HepG2 (cell line): ENCODE measurements at regions of chr19 and their contacts with region 1.

Region 1: DNA sequence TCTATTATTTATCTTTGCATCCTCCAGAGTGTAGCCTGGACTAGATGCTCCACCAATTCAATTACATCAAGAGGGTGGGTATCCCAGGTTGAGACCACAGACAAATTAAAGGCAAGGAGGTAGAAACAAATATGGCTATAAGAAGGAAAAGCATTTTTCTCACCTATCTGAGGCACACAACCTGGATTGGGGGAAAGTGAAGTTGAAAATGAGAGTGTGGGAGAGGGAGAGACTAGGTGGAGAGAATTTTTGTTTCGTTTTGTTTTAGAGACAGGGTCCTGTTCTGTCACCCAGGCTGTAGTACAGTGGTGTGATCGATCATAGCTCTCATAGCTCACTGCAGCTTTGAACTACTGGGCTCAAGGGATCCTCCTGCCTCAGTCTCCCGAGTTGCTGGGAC is 5.8 kb upstream of the PRODH2 start:
- DNase-seq: no peak
- ATAC-seq: no peak
- H3K4me3 ChIP-seq: no peak overlapping the region
- H3K27ac ChIP-seq: no peak overlapping the region
- H3K4me1 ChIP-seq: peaks cover 48% of the 10 kb centered on the region
- H3K27me3 ChIP-seq: no peaks in the 10 kb centered on the region; a peak in 1 of 5 replicates
- CTCF ChIP-seq: no peak
- EP300 ChIP-seq: no peak
- POLR2A ChIP-seq: no peak
- RAD21 ChIP-seq: no peak

Region 2: GRCh38 chr19:35693830-35694599 is 124.4 kb before region 1 on chr19:
- CTCF ChIA-PET with region 1: interaction called, 22 read pairs
- POLR2A ChIA-PET with region 1: interaction called, 5 read pairs
- in situ Hi-C with region 1: loop called (anchors 10 kb)
- intact Hi-C with region 1: loop called (anchors 10 kb)
- DNase-seq: peak; percentile 81
- ATAC-seq: peak; percentile 96
- H3K4me3 ChIP-seq: no peak overlapping the region
- H3K27ac ChIP-seq: no peak overlapping the region
- H3K4me1 ChIP-seq: peaks cover 32% of the 10 kb centered on the region
- H3K27me3 ChIP-seq: no peaks in the 10 kb centered on the region
- CTCF ChIP-seq: peak; percentile 97
- EP300 ChIP-seq: no peak
- POLR2A ChIP-seq: no peak
- RAD21 ChIP-seq: peak; percentile 98

Region 3: GRCh38 chr19:36014029-36014924 is 195.8 kb after region 1 on chr19 and contains the start of gene ALKBH6:
- CTCF ChIA-PET with region 1: no interaction called
- POLR2A ChIA-PET with region 1: no interaction called
- in situ Hi-C with region 1: no loop called
- intact Hi-C with region 1: no loop called
- DNase-seq: peak; percentile 97
- ATAC-seq: peak; percentile 98
- H3K4me3 ChIP-seq: peak within 1 kb of the TSS; percentile 74 to 92 (median 85)
- H3K27ac ChIP-seq: peak within 1 kb of the TSS; percentile 67
- H3K4me1 ChIP-seq: peaks cover 42% of the 10 kb centered on the region
- H3K27me3 ChIP-seq: no peaks in the 10 kb centered on the region; a peak in 1 of 5 replicates
- CTCF ChIP-seq: peak; percentile 48
- EP300 ChIP-seq: no peak
- POLR2A ChIP-seq: peak; percentile 42 to 72; a peak in 3 of 4 replicates
- RAD21 ChIP-seq: no peak
- total RNA-seq, gene ALKBH6: 6.9 and 13.7 TPM in 2 replicates